ENCODE measurements at regions of chr19 and their contacts with region 1.

Region 1: GRCh38 chr19:42450314-42450934 is 7.7 kb upstream of the CXCL17 start:
- DNase-seq: peak; percentile 38 to 72
- H3K4me3 ChIP-seq: no peak overlapping the region
- H3K27ac ChIP-seq: no peak overlapping the region
- H3K4me1 ChIP-seq: peaks cover 0 to 13% (median 5%) of the 10 kb centered on the region in 4 experiments; a peak in 4 of 7 replicates
- H3K27me3 ChIP-seq: no peaks in the 10 kb centered on the region; a peak in 1 of 7 replicates
- CTCF ChIP-seq: peak; percentile 71 to 95 (median 94)
- EP300 ChIP-seq: no peak
- POLR2A ChIP-seq: no peak
- RAD21 ChIP-seq: peak; percentile 98 to 100

Region 2: GRCh38 chr19:42370626-42371170 is 79.7 kb before region 1 on chr19:
- CTCF ChIA-PET with region 1: no interaction called
- POLR2A ChIA-PET with region 1: no interaction called
- DNase-seq: no peak
- H3K4me3 ChIP-seq: peak overlapping the region in 1 of 4 experiments; percentile 28; a peak in 1 of 8 replicates
- H3K27ac ChIP-seq: no peak overlapping the region; the same call in 1 of the 2 replicates
- H3K4me1 ChIP-seq: peaks cover 7 to 29% (median 22%) of the 10 kb centered on the region in 4 experiments
- H3K27me3 ChIP-seq: no peaks in the 10 kb centered on the region
- CTCF ChIP-seq: no peak
- EP300 ChIP-seq: no peak
- POLR2A ChIP-seq: no peak
- RAD21 ChIP-seq: no peak

Region 3: DNA sequence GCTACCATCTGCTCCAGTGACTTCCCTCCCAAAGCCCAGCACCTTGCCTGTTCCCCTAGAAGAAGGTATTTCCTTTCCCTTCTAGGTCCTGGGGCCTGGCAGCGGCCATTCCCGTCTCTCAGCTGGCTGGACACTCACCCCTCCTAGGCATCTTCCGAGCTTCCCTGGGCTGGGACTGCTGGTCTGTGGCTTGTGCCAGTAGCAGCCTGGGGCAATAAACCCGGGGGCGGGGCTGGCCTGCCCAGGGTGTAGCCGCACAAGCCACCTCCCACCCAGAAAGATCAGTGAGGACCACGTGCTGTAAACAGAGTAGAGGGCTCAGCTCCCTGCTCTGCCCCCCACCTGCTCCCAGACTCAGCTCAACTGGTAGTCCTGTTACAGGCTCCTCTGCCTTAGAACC is 38.2 kb before region 1 on chr19:
- CTCF ChIA-PET with region 1: no interaction called
- POLR2A ChIA-PET with region 1: no interaction called
- DNase-seq: no peak
- H3K4me3 ChIP-seq: no peak overlapping the region
- H3K27ac ChIP-seq: no peak overlapping the region
- H3K4me1 ChIP-seq: peaks cover 0 to 9% (median 1%) of the 10 kb centered on the region in 4 experiments; a peak in 2 of 7 replicates
- H3K27me3 ChIP-seq: peaks cover 0 to 26% (median 15%) of the 10 kb centered on the region in 4 experiments; a peak in 5 of 7 replicates
- CTCF ChIP-seq: no peak
- EP300 ChIP-seq: no peak
- POLR2A ChIP-seq: no peak
- RAD21 ChIP-seq: no peak

Region 4: GRCh38 chr19:42461700-42462324 is 11.4 kb after region 1 on chr19:
- CTCF ChIA-PET with region 1: interaction called, 24 read pairs
- POLR2A ChIA-PET with region 1: no interaction called
- DNase-seq: no peak
- H3K4me3 ChIP-seq: no peak overlapping the region
- H3K27ac ChIP-seq: no peak overlapping the region
- H3K4me1 ChIP-seq: peaks cover 0 to 2% (median under 1%) of the 10 kb centered on the region in 4 experiments; a peak in 3 of 7 replicates
- H3K27me3 ChIP-seq: no peaks in the 10 kb centered on the region
- CTCF ChIP-seq: no peak
- EP300 ChIP-seq: no peak
- POLR2A ChIP-seq: no peak
- RAD21 ChIP-seq: no peak

Region 5: GRCh38 chr19:42497492-42498168 is 47.2 kb after region 1 on chr19:
- CTCF ChIA-PET with region 1: interaction called, 11 read pairs
- POLR2A ChIA-PET with region 1: no interaction called
- DNase-seq: no peak
- H3K4me3 ChIP-seq: no peak overlapping the region
- H3K27ac ChIP-seq: no peak overlapping the region
- H3K4me1 ChIP-seq: peaks cover 2 to 7% (median 4%) of the 10 kb centered on the region in 4 experiments
- H3K27me3 ChIP-seq: no peaks in the 10 kb centered on the region; a peak in 2 of 7 replicates
- CTCF ChIP-seq: no peak
- EP300 ChIP-seq: no peak
- POLR2A ChIP-seq: no peak
- RAD21 ChIP-seq: no peak

Region 6: GRCh38 chr19:42521346-42522030 is 71.1 kb after region 1 on chr19:
- CTCF ChIA-PET with region 1: interaction called, 182 read pairs
- POLR2A ChIA-PET with region 1: no interaction called
- DNase-seq: no peak
- H3K4me3 ChIP-seq: no peak overlapping the region
- H3K27ac ChIP-seq: no peak overlapping the region
- H3K4me1 ChIP-seq: no peaks in the 10 kb centered on the region
- H3K27me3 ChIP-seq: no peaks in the 10 kb centered on the region
- CTCF ChIP-seq: no peak
- EP300 ChIP-seq: no peak
- POLR2A ChIP-seq: no peak
- RAD21 ChIP-seq: no peak

Region 7: GRCh38 chr19:42553292-42554045 is 103.0 kb after region 1 on chr19:
- CTCF ChIA-PET with region 1: interaction called, 11 read pairs
- POLR2A ChIA-PET with region 1: no interaction called
- DNase-seq: no peak
- H3K4me3 ChIP-seq: no peak overlapping the region
- H3K27ac ChIP-seq: no peak overlapping the region
- H3K4me1 ChIP-seq: peaks cover 1 to 12% (median 8%) of the 10 kb centered on the region in 4 experiments
- H3K27me3 ChIP-seq: no peaks in the 10 kb centered on the region; a peak in 2 of 7 replicates
- CTCF ChIP-seq: no peak
- EP300 ChIP-seq: no peak
- POLR2A ChIP-seq: no peak
- RAD21 ChIP-seq: no peak

Region 8: DNA sequence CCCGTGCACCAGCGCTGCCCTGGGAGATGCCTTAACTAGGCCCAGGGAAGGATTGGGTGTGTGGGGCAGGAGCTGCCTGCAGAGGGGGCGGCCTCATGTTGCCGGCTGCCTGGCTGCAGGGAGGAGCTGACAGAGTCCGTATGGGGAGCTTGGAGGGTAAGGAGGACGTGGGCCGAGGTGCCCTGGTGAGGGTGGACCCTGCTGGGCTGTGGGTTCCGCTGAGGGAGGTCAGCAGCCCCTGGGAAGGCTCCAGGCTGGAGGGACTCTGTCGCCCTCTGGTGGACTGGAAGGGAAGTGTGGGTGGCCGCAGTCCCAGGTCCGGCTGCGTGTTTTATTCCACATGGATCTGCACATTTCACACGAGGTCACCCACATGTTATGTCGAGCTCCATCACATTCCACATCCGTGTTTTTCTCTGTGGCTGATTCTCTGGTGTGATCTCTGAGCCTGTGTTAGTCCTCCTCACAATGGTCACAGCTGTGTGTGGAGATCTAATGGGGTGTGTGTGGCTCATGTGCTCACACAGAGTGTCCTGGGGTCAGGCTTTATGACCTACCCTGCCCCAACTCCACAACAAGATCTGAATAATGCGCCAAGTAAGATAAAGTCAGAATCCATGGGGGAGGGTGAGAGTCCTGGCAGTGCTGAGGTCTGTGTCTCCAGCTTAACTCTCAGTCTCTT is 146.1 kb after region 1 on chr19:
- CTCF ChIA-PET with region 1: interaction called, 15 read pairs
- POLR2A ChIA-PET with region 1: no interaction called
- DNase-seq: peak in 1 of 2 experiments; percentile 82
- H3K4me3 ChIP-seq: no peak overlapping the region
- H3K27ac ChIP-seq: no peak overlapping the region
- H3K4me1 ChIP-seq: no peaks in the 10 kb centered on the region
- H3K27me3 ChIP-seq: 0 out of 7 replicates have a peak, but pooled peaks cover 0 to 2% (median 0%) of the 10 kb centered on the region in 4 experiments
- CTCF ChIP-seq: peak; percentile 81 to 98 (median 98)
- EP300 ChIP-seq: no peak
- POLR2A ChIP-seq: no peak
- RAD21 ChIP-seq: peak; percentile 71 to 78